HepG2 (cell line): ENCODE measurements at regions of chr2 and their contacts with region 1.

Region 1: GRCh38 chr2:166361351-166362153 is 14.2 kb downstream of the SCN9A start:
- DNase-seq: peak; percentile 79
- ATAC-seq: peak; percentile 96
- H3K4me3 ChIP-seq: no peak overlapping the region
- H3K27ac ChIP-seq: peak overlapping the region; percentile 5
- H3K4me1 ChIP-seq: peaks cover 32% of the 10 kb centered on the region
- H3K27me3 ChIP-seq: no peaks in the 10 kb centered on the region
- CTCF ChIP-seq: peak; percentile 83
- EP300 ChIP-seq: peak in 1 of 2 experiments; percentile 45; a peak in 2 of 4 replicates
- POLR2A ChIP-seq: no peak
- RAD21 ChIP-seq: peak; percentile 78

Region 2: DNA sequence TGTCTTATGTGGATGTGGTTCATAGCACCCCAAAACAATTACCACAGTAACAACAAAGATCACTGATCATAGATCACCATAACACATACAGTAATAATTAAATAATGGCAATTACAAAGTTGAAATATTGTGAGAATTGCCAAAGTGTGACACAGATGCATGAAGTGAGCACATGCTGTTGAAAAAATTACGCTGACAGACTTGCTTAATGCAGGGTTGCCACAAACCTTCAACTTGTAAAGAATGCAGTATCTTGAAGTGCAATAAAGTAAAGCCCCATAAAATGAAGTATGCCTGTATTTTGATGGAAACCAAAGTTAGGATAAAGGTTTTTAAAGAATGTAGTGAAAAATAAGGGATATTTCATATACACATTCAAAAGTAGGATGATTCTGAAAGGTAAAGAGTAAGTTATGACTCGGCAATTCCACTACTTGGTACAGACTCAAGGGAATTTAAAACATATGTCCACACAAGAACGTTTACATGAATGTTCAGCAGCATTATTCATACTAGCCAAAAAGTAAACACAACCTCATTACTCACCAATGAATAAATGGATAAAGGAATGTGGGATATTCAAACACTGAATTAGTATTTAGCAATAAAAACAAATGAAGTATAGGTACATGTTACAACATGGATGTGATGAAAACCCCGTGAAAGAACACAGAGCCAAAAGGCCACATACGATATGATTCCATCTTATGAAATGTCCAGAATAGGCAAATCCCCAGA is 47.4 kb before region 1 on chr2:
- CTCF ChIA-PET with region 1: no interaction called
- POLR2A ChIA-PET with region 1: no interaction called
- in situ Hi-C with region 1: no loop called
- intact Hi-C with region 1: loop called (anchors 1 kb)
- DNase-seq: peak; percentile 30
- ATAC-seq: no peak; the same call in 2 of the 3 replicates
- H3K4me3 ChIP-seq: no peak overlapping the region
- H3K27ac ChIP-seq: no peak overlapping the region
- H3K4me1 ChIP-seq: no peaks in the 10 kb centered on the region
- H3K27me3 ChIP-seq: no peaks in the 10 kb centered on the region
- CTCF ChIP-seq: no peak
- EP300 ChIP-seq: no peak
- POLR2A ChIP-seq: no peak
- RAD21 ChIP-seq: no peak

Region 3: DNA sequence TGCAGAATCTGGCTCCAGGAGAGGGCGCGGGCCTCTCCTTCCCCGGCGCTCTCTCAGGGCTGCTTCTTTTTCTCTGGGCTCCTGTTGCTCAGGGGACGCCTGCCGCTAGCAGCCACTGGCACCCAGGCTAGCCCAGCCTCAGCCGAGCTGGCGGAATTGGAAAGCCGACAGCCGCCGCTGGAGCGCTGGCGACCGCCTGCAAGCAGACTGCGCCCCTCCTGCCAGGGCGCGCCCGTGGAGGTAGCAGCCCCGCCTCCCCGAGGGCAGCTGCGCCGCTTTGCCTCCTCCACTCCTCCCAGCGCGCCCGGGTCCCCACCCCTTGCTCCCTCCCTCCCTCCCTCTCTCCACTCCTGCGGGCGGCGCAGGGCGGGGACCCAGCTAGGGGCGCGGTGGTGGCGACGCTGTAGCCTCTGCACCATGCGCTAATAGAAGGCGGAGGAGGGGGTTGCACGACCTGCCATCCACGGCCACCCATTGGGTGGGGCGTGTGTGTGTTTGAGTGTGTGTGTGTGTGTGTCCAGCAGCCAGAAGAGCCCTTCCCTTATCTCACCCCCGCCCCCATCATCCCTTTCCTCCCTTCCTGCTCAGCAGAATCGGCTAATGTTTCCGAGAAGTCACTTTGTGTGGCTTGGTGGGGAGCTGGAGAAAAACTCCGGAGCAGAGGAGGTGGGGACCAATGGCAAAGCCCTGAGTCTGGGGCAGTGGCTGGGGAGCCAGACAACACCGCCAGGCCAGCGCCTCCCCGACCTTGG is 14.4 kb after region 1 on chr2 and contains the start of gene SCN9A:
- CTCF ChIA-PET with region 1: no interaction called
- POLR2A ChIA-PET with region 1: interaction called, 9 read pairs
- in situ Hi-C with region 1: no loop called
- intact Hi-C with region 1: loop called (anchors 1 kb)
- DNase-seq: peak; percentile 82
- ATAC-seq: peak; percentile 92
- H3K4me3 ChIP-seq: peak within 1 kb of the TSS; percentile 75 to 85 (median 82)
- H3K27ac ChIP-seq: peak within 1 kb of the TSS; percentile 68
- H3K4me1 ChIP-seq: peaks cover 48% of the 10 kb centered on the region
- H3K27me3 ChIP-seq: no peaks in the 10 kb centered on the region; a peak in 1 of 5 replicates
- CTCF ChIP-seq: peak; percentile 52
- EP300 ChIP-seq: peak in 1 of 2 experiments; percentile 18; a peak in 2 of 4 replicates
- POLR2A ChIP-seq: peak; percentile 84 to 90
- RAD21 ChIP-seq: peak; percentile 33; the same call in 1 of the 2 replicates
- total RNA-seq, gene SCN9A: 11.8 and 15.3 TPM in 2 replicates

Region 4: DNA sequence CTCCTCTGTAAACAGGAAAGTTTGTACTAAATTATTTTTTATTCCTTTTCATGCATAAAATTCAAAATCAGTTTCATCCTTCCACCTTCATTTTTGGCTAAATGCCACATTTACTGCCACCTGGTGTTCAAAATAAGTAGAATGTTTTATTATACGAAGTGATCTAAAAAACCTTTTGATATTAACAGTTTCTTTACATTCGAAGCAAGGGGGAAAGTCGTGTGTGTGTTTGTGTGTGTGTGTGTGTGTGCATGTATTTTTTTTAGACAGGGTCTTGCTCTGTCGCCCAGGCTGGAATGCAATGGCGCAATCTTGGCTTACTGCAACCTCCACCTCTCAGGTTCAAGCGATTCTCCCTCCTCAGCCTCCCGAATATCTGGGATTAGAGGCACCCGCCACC is 23.2 kb after region 1 on chr2:
- CTCF ChIA-PET with region 1: interaction called, 56 read pairs
- POLR2A ChIA-PET with region 1: no interaction called
- in situ Hi-C with region 1: no loop called
- intact Hi-C with region 1: loop called (anchors 1 kb)
- DNase-seq: peak; percentile 27
- ATAC-seq: no peak; the same call in 1 of the 3 replicates
- H3K4me3 ChIP-seq: no peak overlapping the region; a peak in 1 of 6 replicates
- H3K27ac ChIP-seq: no peak overlapping the region
- H3K4me1 ChIP-seq: peaks cover 7% of the 10 kb centered on the region
- H3K27me3 ChIP-seq: no peaks in the 10 kb centered on the region; a peak in 1 of 5 replicates
- CTCF ChIP-seq: peak; percentile 68
- EP300 ChIP-seq: no peak
- POLR2A ChIP-seq: no peak
- RAD21 ChIP-seq: no peak

Region 5: GRCh38 chr2:166485558-166486178 is 124.1 kb after region 1 on chr2:
- CTCF ChIA-PET with region 1: no interaction called
- POLR2A ChIA-PET with region 1: no interaction called
- in situ Hi-C with region 1: no loop called
- intact Hi-C with region 1: no loop called
- DNase-seq: no peak
- ATAC-seq: no peak
- H3K4me3 ChIP-seq: no peak overlapping the region
- H3K27ac ChIP-seq: no peak overlapping the region
- H3K4me1 ChIP-seq: no peaks in the 10 kb centered on the region
- H3K27me3 ChIP-seq: no peaks in the 10 kb centered on the region
- CTCF ChIP-seq: no peak
- EP300 ChIP-seq: no peak
- POLR2A ChIP-seq: no peak
- RAD21 ChIP-seq: no peak

Region 6: GRCh38 chr2:166516712-166517303 is 155.3 kb after region 1 on chr2:
- CTCF ChIA-PET with region 1: interaction called, 9 read pairs
- POLR2A ChIA-PET with region 1: no interaction called
- in situ Hi-C with region 1: no loop called
- intact Hi-C with region 1: loop called (anchors 1 kb)
- DNase-seq: peak; percentile 25
- ATAC-seq: peak; percentile 83
- H3K4me3 ChIP-seq: no peak overlapping the region
- H3K27ac ChIP-seq: no peak overlapping the region
- H3K4me1 ChIP-seq: no peaks in the 10 kb centered on the region
- H3K27me3 ChIP-seq: no peaks in the 10 kb centered on the region
- CTCF ChIP-seq: peak; percentile 69
- EP300 ChIP-seq: no peak
- POLR2A ChIP-seq: no peak
- RAD21 ChIP-seq: no peak